CD8-positive, alpha-beta T cell (primary cell): ENCODE measurements at regions of chr6 and their contacts with region 1.

Region 1: DNA sequence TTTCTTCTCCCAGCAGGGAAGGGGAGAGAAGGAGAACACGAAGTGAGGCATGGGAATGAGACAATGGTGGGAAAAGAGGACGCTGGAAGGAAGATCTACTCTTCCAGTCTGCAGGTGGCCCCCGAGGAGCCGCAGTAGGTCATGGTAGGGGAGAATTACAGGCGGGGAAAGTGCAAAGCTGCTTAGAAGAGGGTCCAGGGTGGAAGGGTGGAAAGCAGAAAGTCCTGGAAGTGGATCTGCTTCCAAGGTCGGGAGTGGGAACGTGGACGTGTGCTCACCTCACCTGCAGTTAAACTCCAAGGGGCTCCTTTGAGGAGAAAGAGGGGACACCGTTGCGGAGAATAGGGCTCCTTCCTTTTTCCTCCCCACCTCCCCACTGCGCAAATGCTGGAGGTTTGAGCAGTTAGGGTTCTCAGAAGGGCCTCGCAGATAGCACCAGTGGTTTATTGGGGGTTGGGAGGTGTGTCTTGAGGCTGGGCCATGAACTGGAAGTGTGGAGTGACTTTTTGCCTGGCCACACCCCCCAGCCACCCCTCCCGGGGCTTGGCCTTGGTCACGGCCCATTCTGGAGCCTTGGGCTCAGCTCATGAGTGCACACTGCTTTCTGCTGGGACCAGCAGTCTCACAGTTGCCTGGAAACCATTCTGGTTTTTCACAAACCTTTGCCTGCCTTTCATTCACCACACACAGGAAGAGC is 100.4 kb upstream of the MLN start:
- DNase-seq: peak; percentile 42 to 94 (median 78)
- ATAC-seq: peak; percentile 78
- H3K4me3 ChIP-seq: peak overlapping the region; percentile 27 to 39
- H3K4me3 Mint-ChIP-seq: peak overlapping the region; percentile 64
- H3K27ac ChIP-seq: peak overlapping the region; percentile 71 to 76
- H3K27ac Mint-ChIP-seq: peak overlapping the region; percentile 93
- H3K4me1 ChIP-seq: peaks cover 59% of the 10 kb centered on the region
- H3K4me1 Mint-ChIP-seq: peaks cover 83% of the 10 kb centered on the region
- H3K27me3 ChIP-seq: no peaks in the 10 kb centered on the region
- H3K27me3 Mint-ChIP-seq: no peaks in the 10 kb centered on the region
- CTCF ChIP-seq: no peak

Region 2: GRCh38 chr6:33317669-33318425 is 586.4 kb before region 1 on chr6 and contains the start of gene ZBTB22:
- CTCF ChIA-PET with region 1: no interaction called
- POLR2A ChIA-PET with region 1: no interaction called
- intact Hi-C with region 1: loop called in 1 of 2 experiments (anchors 10 kb)
- DNase-seq: peak; percentile 91 to 98 (median 96)
- ATAC-seq: peak; percentile 61
- H3K4me3 ChIP-seq: peak within 1 kb of the TSS; percentile 72 to 78
- H3K4me3 Mint-ChIP-seq: peak within 1 kb of the TSS; percentile 99
- H3K27ac ChIP-seq: peak within 1 kb of the TSS; percentile 60 to 99
- H3K27ac Mint-ChIP-seq: peak within 1 kb of the TSS; percentile 97
- H3K4me1 ChIP-seq: peaks cover 65% of the 10 kb centered on the region
- H3K4me1 Mint-ChIP-seq: peaks cover 77% of the 10 kb centered on the region
- H3K27me3 ChIP-seq: no peaks in the 10 kb centered on the region
- H3K27me3 Mint-ChIP-seq: no peaks in the 10 kb centered on the region
- CTCF ChIP-seq: no peak
- total RNA-seq, gene ZBTB22: 8.8 to 9.3 TPM

Region 3: GRCh38 chr6:33860706-33861474 is 43.3 kb before region 1 on chr6:
- CTCF ChIA-PET with region 1: interaction called, 3 read pairs
- POLR2A ChIA-PET with region 1: interaction called, 14 read pairs
- intact Hi-C with region 1: loop called (anchors 2 kb)
- DNase-seq: peak in 5 of 9 experiments; percentile 16 to 62 (median 41)
- ATAC-seq: peak; percentile 27
- H3K4me3 ChIP-seq: no peak overlapping the region
- H3K4me3 Mint-ChIP-seq: peak overlapping the region; percentile 21
- H3K27ac ChIP-seq: no peak overlapping the region
- H3K27ac Mint-ChIP-seq: no peak overlapping the region
- H3K4me1 ChIP-seq: peaks cover 57% of the 10 kb centered on the region
- H3K4me1 Mint-ChIP-seq: peaks cover 71% of the 10 kb centered on the region
- H3K27me3 ChIP-seq: peaks cover 0 to 23% of the 10 kb centered on the region in 2 experiments
- H3K27me3 Mint-ChIP-seq: peaks cover 8% of the 10 kb centered on the region
- CTCF ChIP-seq: no peak

Region 4: DNA sequence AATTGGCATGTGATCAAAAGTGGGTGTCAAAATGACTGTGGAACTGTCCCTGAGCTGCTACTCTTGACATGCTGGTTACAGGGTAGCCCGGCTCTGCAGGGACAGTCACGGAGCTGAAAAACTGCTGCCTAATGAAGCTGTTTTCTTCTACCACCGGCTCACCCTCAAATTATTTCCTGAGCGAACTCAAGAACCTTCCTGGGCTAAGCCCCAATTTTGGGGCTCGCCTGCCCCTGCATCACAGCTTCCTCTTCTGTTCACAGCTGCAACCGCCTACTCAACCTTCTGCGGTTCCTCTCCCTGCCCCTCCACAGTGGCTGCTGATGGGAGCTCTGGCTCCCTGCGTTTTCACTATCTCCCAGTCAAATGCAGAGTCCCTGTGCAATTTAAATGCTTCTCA is 10.4 kb after region 1 on chr6:
- CTCF ChIA-PET with region 1: interaction called, 5 read pairs
- POLR2A ChIA-PET with region 1: interaction called, 22 read pairs
- intact Hi-C with region 1: loop called in 1 of 2 experiments (anchors 1 kb)
- DNase-seq: peak; percentile 29 to 82 (median 59)
- ATAC-seq: peak; percentile 87
- H3K4me3 ChIP-seq: peak overlapping the region in 1 of 2 experiments; percentile 4
- H3K4me3 Mint-ChIP-seq: peak overlapping the region; percentile 67
- H3K27ac ChIP-seq: no peak overlapping the region
- H3K27ac Mint-ChIP-seq: peak overlapping the region; percentile 68
- H3K4me1 ChIP-seq: peaks cover 38% of the 10 kb centered on the region
- H3K4me1 Mint-ChIP-seq: peaks cover 49% of the 10 kb centered on the region
- H3K27me3 ChIP-seq: no peaks in the 10 kb centered on the region
- H3K27me3 Mint-ChIP-seq: no peaks in the 10 kb centered on the region
- CTCF ChIP-seq: no peak